SK-N-SH (cell line): ENCODE measurements at regions of chr1 and their contacts with region 1.

Region 1: GRCh38 chr1:7042322-7043190 is 257.3 kb downstream of the CAMTA1 start:
- DNase-seq: peak; percentile 59
- H3K4me3 ChIP-seq: no peak overlapping the region
- H3K27ac ChIP-seq: no peak overlapping the region
- H3K4me1 ChIP-seq: peaks cover 0 to 27% of the 10 kb centered on the region in 2 experiments; a peak in 2 of 4 replicates
- H3K27me3 ChIP-seq: no peaks in the 10 kb centered on the region
- CTCF ChIP-seq: peak; percentile 70
- EP300 ChIP-seq: no peak
- RAD21 ChIP-seq: peak; percentile 71

Region 2: DNA sequence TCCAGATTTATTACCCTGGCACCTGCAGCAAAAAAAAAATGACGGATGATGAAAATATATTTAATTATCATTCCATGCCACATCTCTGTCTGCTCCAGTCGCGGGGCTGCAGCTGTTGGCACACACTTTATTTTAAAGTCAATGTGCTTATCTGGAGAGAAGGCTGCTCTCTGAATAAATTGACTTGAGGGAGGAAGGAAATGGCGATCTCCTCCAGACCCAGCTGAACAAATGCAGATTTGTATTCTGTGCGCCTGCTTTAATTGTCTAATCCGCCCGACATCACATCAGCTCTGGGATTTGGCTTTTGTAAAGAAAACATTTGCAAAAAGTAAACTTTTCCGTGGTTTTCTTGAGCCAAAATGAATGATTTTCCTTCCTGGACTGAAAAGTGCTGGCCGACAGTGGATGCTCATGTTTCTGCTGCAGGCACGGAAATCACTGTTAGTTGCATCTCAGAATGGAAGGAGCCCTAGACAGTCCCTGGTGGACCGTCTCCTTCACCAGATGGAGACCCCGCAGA is 107.1 kb before region 1 on chr1:
- CTCF ChIA-PET with region 1: no interaction called
- POLR2A ChIA-PET with region 1: no interaction called
- DNase-seq: peak; percentile 64
- H3K4me3 ChIP-seq: peak overlapping the region; percentile 24 to 47
- H3K27ac ChIP-seq: peak overlapping the region in 1 of 2 experiments; percentile 53; a peak in 2 of 4 replicates
- H3K4me1 ChIP-seq: peaks cover 0 to 18% of the 10 kb centered on the region in 2 experiments; a peak in 2 of 4 replicates
- H3K27me3 ChIP-seq: no peaks in the 10 kb centered on the region; the same call in 1 of the 2 replicates
- CTCF ChIP-seq: no peak
- EP300 ChIP-seq: peak in 1 of 2 experiments; percentile 45; a peak in 1 of 4 replicates
- RAD21 ChIP-seq: no peak

Region 3: GRCh38 chr1:7010534-7011200 is 31.9 kb before region 1 on chr1:
- CTCF ChIA-PET with region 1: interaction called, 14 read pairs
- POLR2A ChIA-PET with region 1: no interaction called
- DNase-seq: no peak
- H3K4me3 ChIP-seq: no peak overlapping the region
- H3K27ac ChIP-seq: no peak overlapping the region
- H3K4me1 ChIP-seq: no peaks in the 10 kb centered on the region
- H3K27me3 ChIP-seq: no peaks in the 10 kb centered on the region
- CTCF ChIP-seq: no peak
- EP300 ChIP-seq: no peak
- RAD21 ChIP-seq: no peak

Region 4: DNA sequence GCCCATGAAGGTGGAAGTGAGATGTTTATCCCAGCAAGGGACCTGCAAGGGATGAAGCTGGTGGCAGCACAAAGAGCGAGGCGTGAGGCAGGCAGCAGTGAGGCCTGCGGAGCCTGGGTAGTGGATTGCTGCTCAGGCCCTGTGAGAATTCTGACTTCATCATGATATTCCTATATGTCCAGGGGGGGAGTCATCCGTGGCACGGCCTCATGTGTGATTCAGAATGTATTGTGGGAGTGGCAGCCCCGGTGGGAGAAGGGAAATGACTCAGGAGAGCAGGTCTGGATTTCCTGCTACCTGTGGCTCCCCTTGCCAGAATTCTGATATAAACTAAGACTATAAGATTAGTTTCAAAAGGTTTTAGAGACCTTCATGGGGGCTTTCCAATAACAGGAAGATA is 16.4 kb before region 1 on chr1:
- CTCF ChIA-PET with region 1: interaction called, 22 read pairs
- POLR2A ChIA-PET with region 1: no interaction called
- DNase-seq: no peak
- H3K4me3 ChIP-seq: no peak overlapping the region
- H3K27ac ChIP-seq: no peak overlapping the region
- H3K4me1 ChIP-seq: no peaks in the 10 kb centered on the region
- H3K27me3 ChIP-seq: no peaks in the 10 kb centered on the region
- CTCF ChIP-seq: no peak
- EP300 ChIP-seq: no peak
- RAD21 ChIP-seq: no peak

Region 5: GRCh38 chr1:7084232-7084894 is 41.8 kb after region 1 on chr1:
- CTCF ChIA-PET with region 1: interaction called, 12 read pairs
- POLR2A ChIA-PET with region 1: no interaction called
- DNase-seq: no peak
- H3K4me3 ChIP-seq: no peak overlapping the region
- H3K27ac ChIP-seq: no peak overlapping the region
- H3K4me1 ChIP-seq: peaks cover 0 to 5% of the 10 kb centered on the region in 2 experiments; a peak in 1 of 4 replicates
- H3K27me3 ChIP-seq: no peaks in the 10 kb centered on the region
- CTCF ChIP-seq: no peak
- EP300 ChIP-seq: no peak
- RAD21 ChIP-seq: no peak

Region 6: GRCh38 chr1:7207875-7208646 is 165.5 kb after region 1 on chr1:
- CTCF ChIA-PET with region 1: interaction called, 71 read pairs
- POLR2A ChIA-PET with region 1: no interaction called
- DNase-seq: peak; percentile 73
- H3K4me3 ChIP-seq: no peak overlapping the region; a peak in 1 of 4 replicates
- H3K27ac ChIP-seq: no peak overlapping the region
- H3K4me1 ChIP-seq: peaks cover 0 to 8% of the 10 kb centered on the region in 2 experiments; a peak in 2 of 4 replicates
- H3K27me3 ChIP-seq: no peaks in the 10 kb centered on the region
- CTCF ChIP-seq: peak; percentile 55
- EP300 ChIP-seq: no peak
- RAD21 ChIP-seq: peak; percentile 85

Region 7: DNA sequence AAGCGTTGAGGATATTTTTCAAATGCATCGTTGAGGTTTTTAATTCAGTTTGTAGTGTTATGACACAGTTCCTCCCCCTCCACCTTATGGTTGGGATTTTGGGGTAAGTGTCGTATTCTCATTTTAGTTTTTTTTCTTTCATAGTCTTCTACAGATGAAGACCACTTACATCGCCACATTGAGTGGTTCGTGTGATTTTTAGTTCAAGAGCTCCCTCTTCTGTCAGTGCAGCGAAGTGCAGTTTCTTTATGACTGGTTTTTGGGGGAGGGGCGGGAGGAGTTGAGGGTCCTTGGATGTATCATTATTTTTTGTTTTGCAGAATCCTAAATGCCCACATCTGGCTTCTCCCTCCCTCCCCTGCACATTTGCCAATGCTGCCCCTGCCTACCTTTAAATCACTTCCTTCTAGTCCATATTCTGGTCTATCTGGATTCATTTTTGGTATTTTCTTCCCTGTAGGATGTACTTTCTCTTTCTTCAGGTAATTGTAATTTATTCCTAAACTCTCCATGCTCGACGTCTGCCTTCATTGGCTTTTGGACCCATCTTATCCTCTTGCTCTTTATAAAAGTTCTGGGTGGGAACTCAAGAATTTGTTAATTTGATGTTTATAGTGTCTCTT is 175.8 kb after region 1 on chr1:
- CTCF ChIA-PET with region 1: interaction called, 12 read pairs
- POLR2A ChIA-PET with region 1: no interaction called
- DNase-seq: peak; percentile 67
- H3K4me3 ChIP-seq: peak overlapping the region in 1 of 2 experiments; percentile 29; a peak in 1 of 4 replicates
- H3K27ac ChIP-seq: no peak overlapping the region
- H3K4me1 ChIP-seq: peaks cover 2 to 3% of the 10 kb centered on the region in 2 experiments; a peak in 2 of 4 replicates
- H3K27me3 ChIP-seq: no peaks in the 10 kb centered on the region
- CTCF ChIP-seq: peak; percentile 67
- EP300 ChIP-seq: no peak
- RAD21 ChIP-seq: peak; percentile 89

Region 8: GRCh38 chr1:7352364-7352763 is 309.8 kb after region 1 on chr1:
- CTCF ChIA-PET with region 1: no interaction called
- POLR2A ChIA-PET with region 1: no interaction called
- DNase-seq: no peak
- H3K4me3 ChIP-seq: no peak overlapping the region
- H3K27ac ChIP-seq: no peak overlapping the region
- H3K4me1 ChIP-seq: peaks cover 0 to 19% of the 10 kb centered on the region in 2 experiments; a peak in 1 of 4 replicates
- H3K27me3 ChIP-seq: no peaks in the 10 kb centered on the region
- CTCF ChIP-seq: no peak
- EP300 ChIP-seq: no peak
- RAD21 ChIP-seq: no peak

Region 9: DNA sequence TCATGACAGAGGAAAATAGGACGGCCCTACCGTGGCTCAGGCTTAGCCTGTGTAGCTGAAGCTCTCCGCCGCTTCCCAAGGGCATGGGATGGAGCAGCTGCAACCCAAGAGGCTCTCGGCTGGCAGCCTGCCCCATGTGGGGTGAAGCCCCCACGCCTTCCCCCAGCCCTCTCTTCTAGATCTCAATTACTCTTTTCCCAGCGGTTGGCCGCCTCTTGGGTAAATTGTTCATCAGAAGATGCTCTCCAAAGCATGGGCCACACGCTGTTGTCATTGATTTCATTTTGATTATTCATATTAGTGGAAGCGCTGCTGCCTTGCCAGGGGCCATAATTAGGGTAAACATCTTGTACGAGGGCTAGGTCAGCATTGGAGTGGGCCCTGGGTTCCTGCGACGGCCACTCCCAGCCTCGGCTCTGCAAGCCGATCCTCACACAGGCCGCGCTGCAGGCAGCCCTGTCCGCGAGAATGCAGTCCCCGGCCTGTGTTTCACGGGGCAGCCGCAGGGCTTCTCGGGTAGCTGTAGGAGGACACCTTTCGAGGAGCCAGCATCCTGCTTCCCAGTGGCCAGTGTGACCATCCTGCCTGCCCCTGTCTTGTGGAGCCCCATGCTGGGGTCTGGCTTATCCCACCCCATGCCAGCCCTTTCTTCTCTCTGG is 614.1 kb after region 1 on chr1:
- CTCF ChIA-PET with region 1: interaction called, 13 read pairs
- POLR2A ChIA-PET with region 1: no interaction called
- DNase-seq: no peak
- H3K4me3 ChIP-seq: no peak overlapping the region
- H3K27ac ChIP-seq: no peak overlapping the region
- H3K4me1 ChIP-seq: peaks cover 0 to 7% of the 10 kb centered on the region in 2 experiments; a peak in 1 of 4 replicates
- H3K27me3 ChIP-seq: no peaks in the 10 kb centered on the region
- CTCF ChIP-seq: no peak
- EP300 ChIP-seq: no peak
- RAD21 ChIP-seq: no peak